Ovary (tissue), 10 donors: ENCODE measurements at regions of chr2 and their contacts with region 1.

Region 1: GRCh38 chr2:169741-170140 is 94.1 kb downstream of the SH3YL1 start:
- DNase-seq: no peak
- H3K4me3 ChIP-seq: no peak overlapping the region
- H3K27ac ChIP-seq: no peak overlapping the region
- H3K4me1 ChIP-seq: no peaks in the 10 kb centered on the region
- H3K27me3 ChIP-seq: no peaks in the 10 kb centered on the region
- CTCF ChIP-seq: no peak
- EP300 ChIP-seq: no peak
- POLR2A ChIP-seq: no peak

Region 2: GRCh38 chr2:287471-287885 is 117.7 kb after region 1 on chr2:
- intact Hi-C with region 1: loop called in 2 of 4 experiments (anchors 5 kb)
- DNase-seq: peak; percentile 49 to 80 (median 67)
- H3K4me3 ChIP-seq: peak overlapping the region; percentile 62
- H3K27ac ChIP-seq: peak overlapping the region; percentile 50 to 79
- H3K4me1 ChIP-seq: peaks cover 11% of the 10 kb centered on the region
- H3K27me3 ChIP-seq: no peaks in the 10 kb centered on the region
- CTCF ChIP-seq: no peak
- EP300 ChIP-seq: no peak
- POLR2A ChIP-seq: no peak